Right cardiac atrium (tissue), 5 donors: ENCODE measurements at regions of chr1 and their contacts with region 1.

Region 1: GRCh38 chr1:17335821-17336710 is 28.1 kb downstream of the PADI4 start:
- DNase-seq: peak; percentile 44 to 77 (median 75)
- ATAC-seq: no peak
- H3K4me3 ChIP-seq: no peak overlapping the region
- H3K27ac ChIP-seq: no peak overlapping the region
- H3K4me1 ChIP-seq: no peaks in the 10 kb centered on the region
- H3K27me3 ChIP-seq: no peaks in the 10 kb centered on the region

Region 2: GRCh38 chr1:17119773-17120480 is 216.1 kb before region 1 on chr1:
- intact Hi-C with region 1: loop called in 2 of 4 experiments (anchors 5 to 10 kb)
- DNase-seq: peak in 1 of 3 donors; percentile 65
- ATAC-seq: peak in 1 of 2 donors; percentile 15
- H3K4me3 ChIP-seq: no peak overlapping the region
- H3K27ac ChIP-seq: no peak overlapping the region
- H3K4me1 ChIP-seq: no peaks in the 10 kb centered on the region
- H3K27me3 ChIP-seq: no peaks in the 10 kb centered on the region

Region 3: DNA sequence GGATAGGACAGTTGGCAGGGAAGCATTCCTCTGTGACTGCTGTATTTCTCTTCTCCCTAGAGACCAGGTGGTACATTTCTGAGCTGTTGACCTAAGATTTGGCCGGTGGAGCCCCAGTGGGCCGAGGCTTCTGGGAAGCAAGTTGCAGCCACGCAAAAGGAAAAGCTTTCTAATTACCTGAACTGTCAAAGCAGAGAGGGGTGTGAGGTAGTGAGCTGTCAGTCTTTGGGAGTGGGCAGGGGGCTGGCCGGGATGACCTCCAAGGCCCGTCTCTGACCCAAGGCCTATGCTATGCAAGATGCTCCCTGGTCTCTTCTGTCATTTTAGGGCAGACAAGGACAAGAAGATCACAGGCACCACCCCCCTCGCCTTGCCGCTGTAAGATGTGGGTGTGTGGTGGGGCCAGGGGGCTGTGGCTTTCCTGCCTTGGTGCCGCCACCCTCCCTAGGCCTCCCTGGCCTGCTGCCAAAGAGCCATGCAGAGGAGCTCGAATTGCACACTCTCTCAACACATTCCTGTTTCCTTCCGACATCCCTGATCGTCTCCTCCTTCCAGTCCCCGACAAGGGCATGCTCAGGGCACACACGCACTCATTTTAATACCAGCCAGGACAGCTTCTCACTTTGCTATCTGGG is 123.5 kb before region 1 on chr1:
- intact Hi-C with region 1: no loop called
- DNase-seq: peak in 2 of 3 donors; percentile 69 to 70
- ATAC-seq: no peak
- H3K4me3 ChIP-seq: no peak overlapping the region
- H3K27ac ChIP-seq: no peak overlapping the region
- H3K4me1 ChIP-seq: no peaks in the 10 kb centered on the region
- H3K27me3 ChIP-seq: no peaks in the 10 kb centered on the region